ENCODE measurements at regions of chr12 and their contacts with region 1.

Region 1: GRCh38 chr12:59149997-59150642 is 229.8 kb upstream of the LRIG3 start:
- DNase-seq: peak in 1 of 10 donors; percentile 16

Region 2: DNA sequence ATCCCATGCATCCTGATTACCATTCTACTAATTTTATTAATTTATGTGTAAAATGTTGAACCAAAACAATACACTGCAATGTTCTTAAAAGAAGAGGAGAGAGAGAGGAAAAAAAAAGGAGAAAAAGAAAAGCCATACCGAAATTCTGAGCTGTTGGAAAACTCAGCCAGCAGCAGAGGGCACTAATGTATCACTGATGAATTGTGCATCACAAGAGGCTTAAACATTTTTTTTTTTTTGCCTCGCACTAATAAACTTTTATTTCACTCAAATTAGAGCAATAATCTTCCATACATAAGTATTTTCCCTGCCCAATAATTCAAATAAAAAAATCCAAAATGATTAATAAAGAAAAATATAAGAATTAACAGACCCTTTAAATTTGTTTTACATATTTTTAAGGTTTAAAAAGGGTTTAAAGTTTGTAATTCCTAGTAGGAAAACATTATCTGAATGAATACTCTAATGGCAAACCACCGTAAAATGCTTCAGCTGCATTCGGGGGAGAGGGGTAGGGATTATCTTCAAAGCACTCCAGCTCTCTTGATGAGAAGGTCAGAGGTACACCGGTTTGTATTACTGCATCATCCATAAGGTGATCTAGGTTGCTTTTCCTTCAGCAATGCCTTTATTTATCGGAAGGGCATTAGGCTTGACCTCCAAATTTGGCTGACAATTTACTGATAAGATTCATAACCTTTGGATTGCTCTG is 1166.8 kb before region 1 on chr12:
- intact Hi-C with region 1: loop called (anchors 10 kb)
- DNase-seq: peak in 3 of 10 donors; percentile 32 to 51 (median 34)

Region 3: GRCh38 chr12:58540480-58541299 is 609.4 kb before region 1 on chr12:
- intact Hi-C with region 1: loop called (anchors 2 kb)
- DNase-seq: peak; percentile 48 to 96 (median 72)

Region 4: GRCh38 chr12:59030398-59030797 is 119.7 kb before region 1 on chr12:
- intact Hi-C with region 1: no loop called
- DNase-seq: no peak

Region 5: GRCh38 chr12:59113831-59114615 is 36.1 kb before region 1 on chr12:
- intact Hi-C with region 1: loop called (anchors 5 kb)
- DNase-seq: peak; percentile 57 to 97 (median 80)

Region 6: DNA sequence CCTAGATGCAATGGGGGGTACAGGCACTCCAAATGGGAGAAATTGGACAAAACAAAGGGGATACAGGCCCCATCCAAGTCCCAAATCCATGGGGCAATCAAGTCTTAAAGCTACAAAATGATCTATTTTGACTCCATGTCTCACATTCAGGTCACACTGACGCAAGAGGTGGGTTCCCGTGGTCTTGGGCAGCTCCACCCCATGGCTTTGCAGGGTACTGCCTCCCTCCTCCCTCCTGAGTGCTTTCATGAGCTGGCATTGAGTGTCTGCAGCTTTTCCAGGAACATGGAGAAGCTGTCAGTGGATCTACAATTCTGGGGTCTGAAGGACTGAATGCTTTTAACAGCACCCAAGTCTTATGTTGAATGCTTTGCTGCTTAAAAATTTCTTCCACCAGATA is 44.7 kb after region 1 on chr12:
- intact Hi-C with region 1: no loop called
- DNase-seq: no peak

Region 7: DNA sequence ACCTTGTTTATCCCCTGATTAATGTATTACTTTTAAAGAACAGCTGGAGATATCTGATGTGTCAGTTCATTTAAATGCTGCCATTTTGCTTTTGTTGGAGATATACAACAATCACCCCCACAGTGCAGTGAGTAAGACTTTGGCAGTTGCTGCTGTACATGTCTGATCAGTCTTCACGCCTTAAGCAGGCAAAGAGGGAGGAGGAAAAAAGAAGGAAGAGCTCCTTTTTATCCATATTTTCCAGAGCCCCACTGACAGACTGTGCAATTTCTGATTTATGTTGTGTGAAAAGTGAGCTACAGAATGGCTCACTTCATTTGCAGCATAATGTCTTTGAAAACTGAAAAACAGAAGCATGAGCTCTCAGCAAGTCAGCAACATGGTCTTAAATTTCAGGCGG is 89.9 kb after region 1 on chr12:
- intact Hi-C with region 1: no loop called
- DNase-seq: peak in 1 of 10 donors; percentile 58